Heart left ventricle (tissue), 16 donors: ENCODE measurements at regions of chr7 and their contacts with region 1.

Region 1: DNA sequence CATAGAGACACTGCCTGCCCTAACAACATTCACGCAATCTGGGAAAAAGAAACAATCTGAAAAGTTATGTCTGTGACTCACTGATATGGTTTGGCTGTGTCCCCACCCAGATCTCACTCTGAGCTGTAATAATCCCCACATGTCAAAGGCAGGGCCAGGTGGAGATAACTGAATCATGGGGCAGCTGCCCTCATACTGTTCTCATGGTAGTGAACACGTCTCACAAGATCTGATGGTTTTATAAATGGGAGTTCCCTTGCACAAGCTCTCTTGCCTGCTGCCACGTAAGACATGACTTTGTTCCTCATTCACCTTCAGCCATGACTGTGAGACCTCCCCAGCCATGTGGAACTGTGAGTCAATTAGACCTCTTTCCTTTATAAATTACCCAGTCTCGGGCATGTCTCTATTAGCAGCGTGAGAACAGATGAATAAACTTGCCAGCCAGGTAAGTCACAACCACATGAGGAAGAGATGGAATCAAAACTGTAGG is 341.5 kb upstream of the AOAH start:
- DNase-seq: no peak
- ATAC-seq: peak in 1 of 4 donors; percentile 20
- H3K4me3 ChIP-seq: no peak overlapping the region
- H3K27ac ChIP-seq: no peak overlapping the region
- H3K4me1 ChIP-seq: peaks cover 0 to 5% (median 0%) of the 10 kb centered on the region in 12 donors
- H3K27me3 ChIP-seq: no peaks in the 10 kb centered on the region
- CTCF ChIP-seq: no peak
- POLR2A ChIP-seq: no peak

Region 2: GRCh38 chr7:37052705-37053104 is 13.1 kb before region 1 on chr7:
- intact Hi-C with region 1: loop called in 1 of 10 experiments (anchors 1 kb)
- DNase-seq: peak in 1 of 5 donors; percentile 32
- ATAC-seq: no peak
- H3K4me3 ChIP-seq: no peak overlapping the region
- H3K27ac ChIP-seq: no peak overlapping the region
- H3K4me1 ChIP-seq: no peaks in the 10 kb centered on the region
- H3K27me3 ChIP-seq: no peaks in the 10 kb centered on the region
- CTCF ChIP-seq: no peak
- POLR2A ChIP-seq: no peak

Region 3: DNA sequence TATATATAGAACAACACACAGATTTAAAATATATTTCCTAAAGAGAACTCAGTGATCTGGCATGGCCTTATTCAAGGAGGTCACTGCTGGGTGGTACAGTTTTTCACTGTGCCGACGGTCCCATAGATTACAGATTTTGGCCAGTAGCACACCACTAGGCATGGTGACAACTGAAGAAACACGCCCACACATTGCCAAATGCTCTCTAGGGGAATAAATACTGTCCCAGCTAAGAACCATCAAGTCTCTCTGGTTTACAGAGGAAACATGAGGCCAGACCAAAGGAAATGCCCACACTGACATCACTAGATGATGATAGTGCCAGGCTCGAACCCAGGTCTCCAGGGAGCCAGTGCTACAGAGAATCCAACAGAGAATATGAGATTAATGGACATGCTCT is 66.0 kb after region 1 on chr7:
- intact Hi-C with region 1: no loop called
- DNase-seq: no peak
- ATAC-seq: no peak
- H3K4me3 ChIP-seq: no peak overlapping the region
- H3K27ac ChIP-seq: no peak overlapping the region
- H3K4me1 ChIP-seq: peaks cover 0 to 17% (median 10%) of the 10 kb centered on the region in 12 donors
- H3K27me3 ChIP-seq: no peaks in the 10 kb centered on the region
- CTCF ChIP-seq: no peak
- POLR2A ChIP-seq: no peak